Endothelial cell of umbilical vein (primary cell): ENCODE measurements at regions of chr11 and their contacts with region 1.

Region 1: DNA sequence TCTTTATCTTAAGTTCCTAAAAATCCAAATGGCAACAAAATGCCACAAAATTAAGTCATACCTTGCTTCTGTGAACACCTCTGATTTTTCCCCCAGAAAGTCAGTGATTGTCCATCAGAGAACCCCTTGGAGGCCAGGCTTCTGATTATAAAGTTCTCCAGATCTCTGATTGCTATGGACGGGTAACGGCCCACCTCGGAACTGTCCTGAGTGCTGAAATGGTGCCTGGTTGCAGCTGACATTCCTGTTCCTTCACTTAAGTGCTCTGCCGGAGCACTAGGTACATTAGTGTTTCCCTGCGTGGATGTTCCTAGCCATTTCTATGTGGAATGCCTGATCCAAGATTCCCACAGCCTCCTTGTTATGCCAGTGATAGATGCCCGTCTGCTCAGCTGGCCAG is 85.0 kb downstream of the CHST1 start:
- DNase-seq: peak; percentile 44
- H3K4me3 ChIP-seq: no peak overlapping the region
- H3K27ac ChIP-seq: no peak overlapping the region
- H3K4me1 ChIP-seq: no peaks in the 10 kb centered on the region
- H3K27me3 ChIP-seq: no peaks in the 10 kb centered on the region
- CTCF ChIP-seq: no peak
- POLR2A ChIP-seq: no peak

Region 2: DNA sequence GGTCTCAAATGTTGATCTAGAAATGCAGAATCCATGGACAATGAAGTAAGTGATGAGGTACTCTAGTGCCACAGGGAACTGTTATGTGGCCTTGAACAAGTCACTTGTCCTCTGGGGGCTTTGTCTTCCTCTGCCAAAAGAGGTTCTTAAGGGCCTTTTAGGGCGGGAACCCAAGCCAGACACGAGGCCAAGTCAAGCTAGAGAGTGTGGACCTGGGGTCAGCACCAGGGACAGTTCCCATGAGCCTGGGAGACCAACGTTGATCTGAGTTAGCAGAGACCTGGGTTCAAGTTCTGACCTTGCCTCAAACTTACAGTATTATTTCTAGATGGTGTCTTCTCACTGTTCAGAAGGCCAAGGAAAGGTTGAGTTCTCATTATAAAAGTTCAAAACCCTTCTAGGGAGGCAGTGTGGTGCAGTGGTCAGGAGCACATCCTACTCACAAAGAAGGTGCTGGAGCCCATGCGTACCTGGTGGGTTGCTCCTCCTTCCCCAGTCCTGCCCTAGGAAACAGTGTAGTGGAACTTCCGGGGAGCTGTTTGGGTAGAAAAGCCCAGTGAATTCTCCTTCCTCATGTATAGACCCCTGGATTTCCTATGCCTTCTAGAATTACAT is 36.5 kb before region 1 on chr11:
- CTCF ChIA-PET with region 1: no interaction called
- POLR2A ChIA-PET with region 1: no interaction called
- dilution Hi-C with region 1: no loop called
- intact Hi-C with region 1: loop called (anchors 1 kb)
- DNase-seq: peak; percentile 4
- H3K4me3 ChIP-seq: no peak overlapping the region
- H3K27ac ChIP-seq: no peak overlapping the region
- H3K4me1 ChIP-seq: no peaks in the 10 kb centered on the region
- H3K27me3 ChIP-seq: no peaks in the 10 kb centered on the region
- CTCF ChIP-seq: no peak
- POLR2A ChIP-seq: no peak